ENCODE measurements at regions of chr7 and their contacts with region 1.

Region 1: GRCh38 chr7:24979863-24980533 is at the start of gene OSBPL3:
- DNase-seq: peak; percentile 97
- H3K4me3 ChIP-seq: peak within 1 kb of the TSS; percentile 49 to 76 (median 66)
- H3K27ac ChIP-seq: peak within 1 kb of the TSS; percentile 78 to 87 (median 80)
- H3K4me1 ChIP-seq: peaks cover 0 to 29% (median 21%) of the 10 kb centered on the region in 4 donors
- H3K27me3 ChIP-seq: peaks cover 0 to 8% (median 0%) of the 10 kb centered on the region in 3 donors
- CTCF ChIP-seq: no peak
- EP300 ChIP-seq: no peak
- POLR2A ChIP-seq: no peak
- total RNA-seq, gene OSBPL3: 1.8 to 2.2 (median 1.9) TPM

Region 2: GRCh38 chr7:24819916-24820689 is 159.9 kb before region 1 on chr7:
- intact Hi-C with region 1: loop called (anchors 5 kb)
- DNase-seq: peak; percentile 89
- H3K4me3 ChIP-seq: no peak overlapping the region
- H3K27ac ChIP-seq: peak overlapping the region in 2 of 4 donors; percentile 44 to 51
- H3K4me1 ChIP-seq: peaks cover 0 to 13% (median 4%) of the 10 kb centered on the region in 4 donors
- H3K27me3 ChIP-seq: no peaks in the 10 kb centered on the region
- CTCF ChIP-seq: peak; percentile 61 to 76 (median 72)
- EP300 ChIP-seq: no peak
- POLR2A ChIP-seq: no peak

Region 3: GRCh38 chr7:24956021-24956420 is 24.0 kb before region 1 on chr7:
- intact Hi-C with region 1: no loop called
- DNase-seq: no peak
- H3K4me3 ChIP-seq: no peak overlapping the region
- H3K27ac ChIP-seq: no peak overlapping the region
- H3K4me1 ChIP-seq: no peaks in the 10 kb centered on the region
- H3K27me3 ChIP-seq: no peaks in the 10 kb centered on the region
- CTCF ChIP-seq: no peak
- EP300 ChIP-seq: no peak
- POLR2A ChIP-seq: no peak

Region 4: DNA sequence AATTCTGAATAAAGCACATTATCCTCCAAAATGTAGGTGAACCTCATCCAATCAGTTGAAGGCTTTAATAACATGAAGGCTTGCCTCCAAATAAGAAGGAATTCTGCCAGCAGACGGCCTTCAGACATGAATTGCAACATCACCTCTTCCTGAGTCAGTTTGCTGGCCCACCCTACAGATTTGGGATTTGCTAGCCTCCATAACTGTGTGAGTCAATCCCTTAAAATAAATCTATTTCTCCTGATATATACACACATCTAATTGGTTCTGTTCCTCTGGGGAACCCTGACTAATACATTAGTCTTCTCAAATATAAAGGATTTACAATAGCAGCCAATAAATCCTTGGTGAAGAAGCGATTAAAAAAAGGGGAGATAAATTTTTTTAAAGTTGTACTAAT is 34.8 kb after region 1 on chr7:
- intact Hi-C with region 1: no loop called
- DNase-seq: no peak
- H3K4me3 ChIP-seq: no peak overlapping the region
- H3K27ac ChIP-seq: no peak overlapping the region
- H3K4me1 ChIP-seq: no peaks in the 10 kb centered on the region
- H3K27me3 ChIP-seq: no peaks in the 10 kb centered on the region
- CTCF ChIP-seq: no peak
- EP300 ChIP-seq: no peak
- POLR2A ChIP-seq: no peak

Region 5: GRCh38 chr7:25125137-25125946 is 145.3 kb after region 1 on chr7 and contains the start of gene CYCS:
- intact Hi-C with region 1: loop called (anchors 1 kb)
- DNase-seq: peak; percentile 100
- H3K4me3 ChIP-seq: peak within 1 kb of the TSS; percentile 75 to 98 (median 91)
- H3K27ac ChIP-seq: peak within 1 kb of the TSS; percentile 93 to 99 (median 98)
- H3K4me1 ChIP-seq: peaks cover 0 to 21% (median 15%) of the 10 kb centered on the region in 4 donors
- H3K27me3 ChIP-seq: no peaks in the 10 kb centered on the region
- CTCF ChIP-seq: no peak
- EP300 ChIP-seq: peak in 2 of 4 donors; percentile 81 to 99
- POLR2A ChIP-seq: peak; percentile 96 to 98
- total RNA-seq, gene CYCS: 33.2 to 69.2 (median 48.7) TPM